Activated CD8-positive, alpha-beta T cell treated with anti-CD3 and anti-CD28 coated beads for 36 hours (primary cell): ENCODE measurements at regions of chr11 and their contacts with region 1.

Region 1: GRCh38 chr11:60913793-60914632 is at the start of gene TMEM109:
- DNase-seq: peak; percentile 91
- ATAC-seq: peak; percentile 72
- H3K4me3 Mint-ChIP-seq: peak within 1 kb of the TSS; percentile 90
- H3K27ac Mint-ChIP-seq: peak within 1 kb of the TSS; percentile 97
- H3K4me1 Mint-ChIP-seq: peaks cover 71% of the 10 kb centered on the region
- H3K27me3 Mint-ChIP-seq: no peaks in the 10 kb centered on the region
- CTCF ChIP-seq: no peak
- total RNA-seq, gene TMEM109: 93.2 to 101 TPM

Region 2: DNA sequence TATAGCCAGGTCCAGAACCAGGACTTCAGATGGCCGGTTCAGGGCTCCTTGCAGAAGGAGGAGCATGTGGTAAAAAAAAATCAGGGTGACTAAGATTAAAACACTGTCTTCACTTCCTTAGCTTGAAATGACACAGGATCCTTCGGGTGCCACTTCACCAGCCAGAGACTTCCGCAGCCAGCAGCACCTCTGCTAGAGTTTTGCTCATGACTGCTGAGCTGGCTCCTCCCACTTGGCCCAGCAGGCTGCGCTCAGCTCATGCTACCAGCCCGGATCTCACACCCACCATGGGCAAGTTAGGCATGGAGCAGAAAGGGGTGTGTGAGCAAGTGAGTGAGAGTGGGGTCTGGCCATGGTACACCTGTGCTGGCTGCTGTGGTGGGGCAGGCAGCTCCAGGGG is 196.1 kb before region 1 on chr11:
- CTCF ChIA-PET with region 1: no interaction called
- POLR2A ChIA-PET with region 1: no interaction called
- intact Hi-C with region 1: no loop called
- DNase-seq: peak; percentile 3
- ATAC-seq: peak; percentile 30
- H3K4me3 Mint-ChIP-seq: no peak overlapping the region
- H3K27ac Mint-ChIP-seq: no peak overlapping the region
- H3K4me1 Mint-ChIP-seq: no peaks in the 10 kb centered on the region
- H3K27me3 Mint-ChIP-seq: peaks cover 6% of the 10 kb centered on the region
- CTCF ChIP-seq: no peak

Region 3: GRCh38 chr11:60777572-60777971 is 136.4 kb before region 1 on chr11:
- CTCF ChIA-PET with region 1: no interaction called
- POLR2A ChIA-PET with region 1: no interaction called
- intact Hi-C with region 1: no loop called
- DNase-seq: no peak
- ATAC-seq: no peak
- H3K4me3 Mint-ChIP-seq: no peak overlapping the region
- H3K27ac Mint-ChIP-seq: no peak overlapping the region
- H3K4me1 Mint-ChIP-seq: peaks cover 11% of the 10 kb centered on the region
- H3K27me3 Mint-ChIP-seq: no peaks in the 10 kb centered on the region
- CTCF ChIP-seq: no peak

Region 4: GRCh38 chr11:60851327-60852104 is 62.5 kb before region 1 on chr11:
- CTCF ChIA-PET with region 1: no interaction called
- POLR2A ChIA-PET with region 1: no interaction called
- intact Hi-C with region 1: no loop called
- DNase-seq: no peak
- ATAC-seq: no peak
- H3K4me3 Mint-ChIP-seq: no peak overlapping the region
- H3K27ac Mint-ChIP-seq: no peak overlapping the region
- H3K4me1 Mint-ChIP-seq: peaks cover 5% of the 10 kb centered on the region
- H3K27me3 Mint-ChIP-seq: no peaks in the 10 kb centered on the region
- CTCF ChIP-seq: no peak

Region 5: GRCh38 chr11:60926485-60926884 is 12.5 kb after region 1 on chr11:
- CTCF ChIA-PET with region 1: interaction called, 10 read pairs
- POLR2A ChIA-PET with region 1: interaction called, 5 read pairs
- intact Hi-C with region 1: no loop called
- DNase-seq: no peak
- ATAC-seq: no peak
- H3K4me3 Mint-ChIP-seq: no peak overlapping the region
- H3K27ac Mint-ChIP-seq: no peak overlapping the region
- H3K4me1 Mint-ChIP-seq: peaks cover 20% of the 10 kb centered on the region
- H3K27me3 Mint-ChIP-seq: peaks cover 11% of the 10 kb centered on the region
- CTCF ChIP-seq: no peak